CD4-positive, alpha-beta T cell (primary cell): ENCODE measurements at regions of chr5 and their contacts with region 1.

Region 1: DNA sequence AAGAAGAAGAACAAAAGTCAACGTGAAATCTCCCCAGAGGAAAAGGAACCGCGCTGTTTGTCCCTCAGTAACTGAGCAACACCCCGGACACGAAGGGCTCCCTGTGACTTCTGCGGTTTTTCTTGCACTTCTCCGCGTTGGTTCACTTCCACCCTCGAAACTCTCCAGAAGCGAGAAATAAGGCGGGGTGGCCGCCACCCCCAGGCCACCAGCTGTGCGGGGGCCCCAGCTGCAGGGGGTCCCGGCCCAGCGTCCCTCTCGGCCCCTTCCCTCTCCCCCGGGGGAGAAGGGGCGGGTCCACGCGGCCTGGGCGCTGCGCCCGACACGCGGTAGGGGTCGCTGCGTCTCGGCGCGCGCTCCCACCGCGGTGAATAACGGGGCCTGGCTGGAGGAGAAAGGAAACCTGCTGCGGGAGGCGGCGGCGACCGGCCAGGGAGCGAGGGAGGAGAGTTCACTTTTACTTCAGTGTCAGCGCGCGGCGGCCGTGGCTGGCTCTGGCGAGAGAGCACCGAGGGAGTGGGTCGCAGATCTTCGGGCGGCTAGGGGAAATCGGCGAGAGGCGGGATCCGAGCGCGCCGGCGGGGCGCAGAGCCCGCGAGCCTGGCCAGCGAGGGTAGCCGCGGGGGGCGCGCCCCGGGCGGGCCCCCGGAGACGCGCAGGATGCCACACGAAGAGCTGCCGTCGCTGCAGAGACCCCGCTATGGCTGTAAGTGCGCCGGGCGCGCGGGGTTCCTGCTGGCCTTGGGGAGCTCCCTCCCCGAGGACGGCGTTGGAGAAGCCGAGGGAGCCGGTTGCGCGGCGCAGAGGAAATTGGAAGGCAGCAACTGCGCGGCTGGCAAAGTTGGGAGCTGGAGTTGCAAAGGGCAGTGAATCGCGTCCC is at the start of gene IQGAP2:
- DNase-seq: peak; percentile 64 to 95 (median 81)
- ATAC-seq: peak; percentile 58
- H3K4me3 ChIP-seq: peak within 1 kb of the TSS; percentile 96
- H3K4me3 Mint-ChIP-seq: peak within 1 kb of the TSS; percentile 92
- H3K27ac ChIP-seq: peak within 1 kb of the TSS; percentile 90 to 93
- H3K27ac Mint-ChIP-seq: peak within 1 kb of the TSS; percentile 94
- H3K4me1 ChIP-seq: peaks cover 45% of the 10 kb centered on the region
- H3K4me1 Mint-ChIP-seq: peaks cover 67% of the 10 kb centered on the region
- H3K27me3 ChIP-seq: no peaks in the 10 kb centered on the region
- H3K27me3 Mint-ChIP-seq: no peaks in the 10 kb centered on the region
- CTCF ChIP-seq: peak; percentile 78
- total RNA-seq, gene IQGAP2: 58.8 TPM

Region 2: GRCh38 chr5:76325876-76326491 is 77.1 kb before region 1 on chr5:
- CTCF ChIA-PET with region 1: interaction called, 3 read pairs
- POLR2A ChIA-PET with region 1: interaction called, 38 read pairs
- intact Hi-C with region 1: no loop called
- DNase-seq: peak in 11 of 14 experiments; percentile 13 to 88 (median 45)
- ATAC-seq: peak; percentile 87
- H3K4me3 ChIP-seq: no peak overlapping the region
- H3K4me3 Mint-ChIP-seq: peak overlapping the region; percentile 59
- H3K27ac ChIP-seq: peak overlapping the region; percentile 44 to 63
- H3K27ac Mint-ChIP-seq: peak overlapping the region; percentile 87
- H3K4me1 ChIP-seq: peaks cover 59% of the 10 kb centered on the region
- H3K4me1 Mint-ChIP-seq: peaks cover 63% of the 10 kb centered on the region
- H3K27me3 ChIP-seq: no peaks in the 10 kb centered on the region
- H3K27me3 Mint-ChIP-seq: no peaks in the 10 kb centered on the region
- CTCF ChIP-seq: no peak

Region 3: DNA sequence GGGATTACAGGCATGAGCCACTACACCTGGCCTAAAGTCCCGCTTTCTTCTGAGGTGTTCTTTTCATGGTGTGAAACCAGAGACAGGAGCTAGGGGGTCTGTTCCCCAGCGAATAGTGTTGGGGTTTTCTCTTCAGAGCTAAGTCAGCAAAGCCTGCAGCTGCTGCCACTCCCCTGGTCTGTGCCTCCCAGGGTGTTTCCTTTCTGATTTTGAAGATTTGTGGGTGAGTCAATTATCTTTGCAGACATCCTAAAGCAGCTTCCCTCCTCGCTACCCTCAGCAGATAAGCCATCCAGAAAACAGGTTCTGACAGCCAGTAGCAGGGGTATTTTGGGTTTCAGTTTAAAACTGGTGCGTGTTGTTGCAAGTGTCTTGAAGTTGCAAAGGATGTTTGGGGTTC is 72.0 kb before region 1 on chr5:
- CTCF ChIA-PET with region 1: interaction called, 6 read pairs
- POLR2A ChIA-PET with region 1: interaction called, 38 read pairs
- intact Hi-C with region 1: no loop called
- DNase-seq: peak in 13 of 14 experiments; percentile 9 to 68 (median 37)
- ATAC-seq: peak; percentile 84
- H3K4me3 ChIP-seq: peak overlapping the region; percentile 2
- H3K4me3 Mint-ChIP-seq: peak overlapping the region; percentile 70
- H3K27ac ChIP-seq: peak overlapping the region in 1 of 2 donors; percentile 63
- H3K27ac Mint-ChIP-seq: peak overlapping the region; percentile 88
- H3K4me1 ChIP-seq: peaks cover 59% of the 10 kb centered on the region
- H3K4me1 Mint-ChIP-seq: peaks cover 75% of the 10 kb centered on the region
- H3K27me3 ChIP-seq: no peaks in the 10 kb centered on the region
- H3K27me3 Mint-ChIP-seq: no peaks in the 10 kb centered on the region
- CTCF ChIP-seq: no peak

Region 4: GRCh38 chr5:76337953-76338451 is 65.1 kb before region 1 on chr5:
- CTCF ChIA-PET with region 1: no interaction called
- POLR2A ChIA-PET with region 1: interaction called, 11 read pairs
- intact Hi-C with region 1: loop called (anchors 1 to 2 kb)
- DNase-seq: peak in 12 of 14 experiments; percentile 8 to 80 (median 25)
- ATAC-seq: peak; percentile 82
- H3K4me3 ChIP-seq: no peak overlapping the region
- H3K4me3 Mint-ChIP-seq: no peak overlapping the region
- H3K27ac ChIP-seq: no peak overlapping the region
- H3K27ac Mint-ChIP-seq: no peak overlapping the region
- H3K4me1 ChIP-seq: peaks cover 23% of the 10 kb centered on the region
- H3K4me1 Mint-ChIP-seq: peaks cover 38% of the 10 kb centered on the region
- H3K27me3 ChIP-seq: no peaks in the 10 kb centered on the region
- H3K27me3 Mint-ChIP-seq: no peaks in the 10 kb centered on the region
- CTCF ChIP-seq: peak; percentile 72

Region 5: DNA sequence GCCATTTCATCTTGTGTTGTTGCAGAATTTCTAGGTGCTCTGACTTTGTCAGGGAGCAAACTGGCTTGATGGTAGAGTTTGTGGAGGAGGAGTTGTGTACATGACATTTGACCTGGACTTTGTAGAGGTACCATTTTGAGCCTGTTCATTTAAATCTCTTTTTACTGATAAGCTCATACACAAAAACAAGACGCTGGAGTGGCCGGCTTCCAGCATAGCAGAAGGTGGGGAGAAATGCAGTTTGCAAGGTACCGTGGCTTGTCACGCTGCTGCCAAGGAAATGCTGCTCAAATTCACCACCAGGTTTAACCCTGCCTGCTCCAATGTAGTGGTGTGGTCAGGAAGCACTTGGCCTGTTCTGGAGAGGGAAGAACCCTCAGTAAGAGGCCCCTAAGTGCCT is 18.9 kb before region 1 on chr5:
- CTCF ChIA-PET with region 1: interaction called, 5 read pairs
- POLR2A ChIA-PET with region 1: interaction called, 40 read pairs
- intact Hi-C with region 1: loop called in 1 of 2 experiments (anchors 2 kb)
- DNase-seq: no peak
- ATAC-seq: no peak
- H3K4me3 ChIP-seq: no peak overlapping the region
- H3K4me3 Mint-ChIP-seq: peak overlapping the region; percentile 40
- H3K27ac ChIP-seq: no peak overlapping the region
- H3K27ac Mint-ChIP-seq: peak overlapping the region; percentile 19
- H3K4me1 ChIP-seq: peaks cover 29% of the 10 kb centered on the region
- H3K4me1 Mint-ChIP-seq: peaks cover 54% of the 10 kb centered on the region
- H3K27me3 ChIP-seq: no peaks in the 10 kb centered on the region
- H3K27me3 Mint-ChIP-seq: no peaks in the 10 kb centered on the region
- CTCF ChIP-seq: no peak

Region 6: GRCh38 chr5:76473661-76474060 is 70.5 kb after region 1 on chr5:
- CTCF ChIA-PET with region 1: interaction called, 6 read pairs
- POLR2A ChIA-PET with region 1: interaction called, 22 read pairs
- intact Hi-C with region 1: loop called (anchors 1 to 5 kb)
- DNase-seq: peak; percentile 40 to 90 (median 64)
- ATAC-seq: peak; percentile 95
- H3K4me3 ChIP-seq: no peak overlapping the region
- H3K4me3 Mint-ChIP-seq: peak overlapping the region; percentile 26
- H3K27ac ChIP-seq: peak overlapping the region; percentile 68
- H3K27ac Mint-ChIP-seq: peak overlapping the region; percentile 91
- H3K4me1 ChIP-seq: peaks cover 58% of the 10 kb centered on the region
- H3K4me1 Mint-ChIP-seq: peaks cover 84% of the 10 kb centered on the region
- H3K27me3 ChIP-seq: no peaks in the 10 kb centered on the region
- H3K27me3 Mint-ChIP-seq: no peaks in the 10 kb centered on the region
- CTCF ChIP-seq: no peak

Region 7: GRCh38 chr5:76582230-76583162 is 179.4 kb after region 1 on chr5:
- CTCF ChIA-PET with region 1: interaction called, 11 read pairs
- POLR2A ChIA-PET with region 1: interaction called, 26 read pairs
- intact Hi-C with region 1: loop called (anchors 1 to 5 kb)
- DNase-seq: peak in 3 of 14 experiments; percentile 8 to 65 (median 57)
- ATAC-seq: no peak
- H3K4me3 ChIP-seq: no peak overlapping the region
- H3K4me3 Mint-ChIP-seq: no peak overlapping the region
- H3K27ac ChIP-seq: peak overlapping the region in 1 of 2 donors; percentile 7
- H3K27ac Mint-ChIP-seq: peak overlapping the region; percentile 57
- H3K4me1 ChIP-seq: peaks cover 3% of the 10 kb centered on the region
- H3K4me1 Mint-ChIP-seq: peaks cover 28% of the 10 kb centered on the region
- H3K27me3 ChIP-seq: no peaks in the 10 kb centered on the region
- H3K27me3 Mint-ChIP-seq: no peaks in the 10 kb centered on the region
- CTCF ChIP-seq: no peak